Activated T-helper 1 cell treated with anti-CD3 and anti-CD28 coated beads, Interleukin-12 subunit alpha, Interleukin-12 subunit beta, Interleukin-2, Interleukin-4 antibody, amounts not matched to agents 30 ng/mL and 10 ng/mL and 1 ng/mL, durations not matched to agents 14 hours and 24 hours and 36 hours (primary cell): ENCODE measurements at regions of chr20 and their contacts with region 1.

Region 1: GRCh38 chr20:43666376-43667328 is at the start of gene MYBL2:
- DNase-seq: peak; percentile 71
- H3K4me3 Mint-ChIP-seq: peak within 1 kb of the TSS; percentile 82
- H3K27ac Mint-ChIP-seq: peak within 1 kb of the TSS; percentile 48
- H3K4me1 Mint-ChIP-seq: peaks cover 23% of the 10 kb centered on the region
- H3K27me3 Mint-ChIP-seq: peaks cover 14% of the 10 kb centered on the region
- total RNA-seq, gene MYBL2: 95.1 and 95.5 TPM in 2 replicates

Region 2: DNA sequence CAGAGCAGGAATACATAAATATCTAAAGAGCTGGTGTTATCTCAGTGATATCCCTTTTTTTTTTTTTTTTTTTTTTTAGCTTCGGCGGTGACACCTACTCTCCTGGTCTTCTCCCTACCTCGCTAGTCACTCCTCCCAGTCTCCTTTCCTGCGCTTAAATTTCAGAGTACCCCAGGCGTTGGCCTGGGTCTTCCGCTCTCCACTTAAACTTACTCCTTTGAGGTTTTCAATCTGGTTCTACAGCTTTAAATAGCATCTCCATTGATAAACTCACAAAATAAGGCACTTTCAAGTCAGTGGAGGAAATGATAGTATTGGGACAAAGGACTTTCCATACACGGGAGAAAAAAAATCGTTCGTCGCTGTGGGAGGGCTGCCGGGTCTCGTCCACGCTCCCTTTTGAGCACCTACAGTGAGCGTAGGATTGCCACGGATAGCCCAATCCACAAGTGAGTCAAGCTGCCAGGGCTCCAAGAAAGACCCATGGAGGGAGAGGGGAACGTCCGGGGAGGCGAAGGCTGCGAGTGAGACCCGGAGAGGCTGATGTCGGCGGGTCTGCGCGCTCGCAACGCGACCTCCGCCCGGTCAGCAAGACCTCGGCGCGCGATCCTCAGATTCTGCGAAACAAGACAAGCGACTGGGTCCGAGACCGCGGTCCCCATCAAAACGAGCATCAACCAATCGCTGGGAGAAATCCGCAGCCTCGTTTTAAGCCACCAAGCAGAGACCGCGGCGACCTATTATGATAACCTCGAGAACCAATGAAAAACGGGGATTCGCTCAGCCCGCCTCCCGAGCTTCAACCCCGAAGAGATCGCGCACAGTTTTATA is 209.6 kb before region 1 on chr20:
- intact Hi-C with region 1: loop called (anchors 1 kb)
- DNase-seq: peak; percentile 83
- H3K4me3 Mint-ChIP-seq: peak overlapping the region; percentile 88
- H3K27ac Mint-ChIP-seq: peak overlapping the region; percentile 100
- H3K4me1 Mint-ChIP-seq: peaks cover 34% of the 10 kb centered on the region
- H3K27me3 Mint-ChIP-seq: peaks cover 17% of the 10 kb centered on the region

Region 3: GRCh38 chr20:43514062-43514999 is 152.3 kb before region 1 on chr20:
- intact Hi-C with region 1: loop called (anchors 1 kb)
- DNase-seq: peak; percentile 88
- H3K4me3 Mint-ChIP-seq: peak overlapping the region; percentile 95
- H3K27ac Mint-ChIP-seq: peak overlapping the region; percentile 91
- H3K4me1 Mint-ChIP-seq: no peaks in the 10 kb centered on the region
- H3K27me3 Mint-ChIP-seq: peaks cover 4% of the 10 kb centered on the region

Region 4: GRCh38 chr20:43721429-43722152 is 54.9 kb after region 1 on chr20:
- intact Hi-C with region 1: loop called (anchors 5 kb)
- DNase-seq: no peak
- H3K4me3 Mint-ChIP-seq: peak overlapping the region; percentile 65
- H3K27ac Mint-ChIP-seq: peak overlapping the region; percentile 85
- H3K4me1 Mint-ChIP-seq: peaks cover 34% of the 10 kb centered on the region
- H3K27me3 Mint-ChIP-seq: no peaks in the 10 kb centered on the region

Region 5: GRCh38 chr20:43914311-43915210 is 247.9 kb after region 1 on chr20 and contains the start of gene TOX2:
- intact Hi-C with region 1: loop called (anchors 10 kb)
- DNase-seq: peak; percentile 42
- H3K4me3 Mint-ChIP-seq: peak within 1 kb of the TSS; percentile 87
- H3K27ac Mint-ChIP-seq: peak within 1 kb of the TSS; percentile 81
- H3K4me1 Mint-ChIP-seq: peaks cover 29% of the 10 kb centered on the region
- H3K27me3 Mint-ChIP-seq: peaks cover 37% of the 10 kb centered on the region
- total RNA-seq, gene TOX2: 4.0 and 4.8 TPM in 2 replicates